ENCODE measurements at regions of chr6 and their contacts with region 1.

Region 1: DNA sequence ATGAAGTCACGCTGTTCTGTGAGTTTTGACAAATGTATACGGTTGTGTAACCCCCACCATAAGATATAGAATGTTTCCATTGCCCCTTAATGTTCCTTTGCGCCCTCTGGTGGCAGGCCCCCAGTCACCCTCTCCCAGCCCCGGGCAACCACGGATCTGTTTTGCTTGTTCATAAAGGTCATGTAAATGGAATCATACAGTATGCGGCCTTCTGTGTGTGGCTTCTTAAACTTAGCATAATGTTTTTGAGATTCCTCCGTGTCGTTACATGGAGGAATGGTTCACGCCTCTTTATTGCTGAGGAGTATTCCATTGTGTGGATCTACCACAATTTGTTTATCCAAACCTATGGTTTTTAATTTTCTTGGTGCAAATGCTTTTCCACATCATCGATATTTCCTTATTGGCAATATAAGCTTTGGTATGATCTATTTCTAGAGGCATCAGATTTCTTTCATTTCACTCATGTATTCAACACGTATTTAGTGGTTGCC is 28.4 kb downstream of the LYRM2 start:
- DNase-seq: no peak
- H3K4me3 ChIP-seq: no peak overlapping the region
- H3K27ac ChIP-seq: no peak overlapping the region
- H3K27me3 ChIP-seq: no peaks in the 10 kb centered on the region
- CTCF ChIP-seq: peak; percentile 77

Region 2: DNA sequence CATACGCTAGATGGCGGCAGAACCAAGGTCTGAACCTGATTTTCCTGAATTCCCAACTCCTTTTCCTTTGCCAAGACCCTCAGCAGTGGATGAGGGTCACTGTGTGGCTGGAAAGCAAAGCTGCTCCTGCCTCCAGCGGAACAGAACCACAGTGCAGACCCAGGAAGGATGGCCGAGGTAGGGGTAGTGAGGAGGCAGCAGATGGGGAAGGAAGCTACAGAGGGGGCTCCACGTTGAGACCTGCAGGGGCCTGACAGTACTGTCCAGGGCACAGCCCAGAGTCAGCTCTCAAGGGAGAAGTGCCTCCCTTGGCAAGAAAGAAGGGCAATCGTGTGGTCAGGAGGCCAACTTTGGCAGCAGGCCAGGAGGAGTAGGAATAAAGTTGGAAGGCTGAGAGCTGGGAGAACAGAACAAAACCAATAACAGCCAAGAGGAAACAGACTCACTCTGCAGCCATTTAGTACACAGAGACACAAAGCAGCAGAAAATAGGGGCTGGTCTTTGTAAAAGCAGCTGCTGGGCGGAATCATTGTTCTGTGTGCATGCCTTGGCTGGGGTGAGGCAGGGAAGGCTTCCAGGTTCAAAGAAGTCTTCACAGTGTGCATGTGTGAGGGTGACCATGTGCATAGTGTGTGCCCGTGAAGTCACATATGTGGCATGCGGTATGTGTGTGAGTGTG is 298.2 kb before region 1 on chr6:
- CTCF ChIA-PET with region 1: interaction called, 10 read pairs
- POLR2A ChIA-PET with region 1: no interaction called
- DNase-seq: no peak
- H3K4me3 ChIP-seq: no peak overlapping the region
- H3K27ac ChIP-seq: no peak overlapping the region
- H3K27me3 ChIP-seq: peaks cover 14% of the 10 kb centered on the region
- CTCF ChIP-seq: peak; percentile 75

Region 3: GRCh38 chr6:89432875-89433251 is 177.3 kb before region 1 on chr6 and contains the start of gene ANKRD6:
- CTCF ChIA-PET with region 1: interaction called, 12 read pairs
- POLR2A ChIA-PET with region 1: no interaction called
- DNase-seq: no peak
- H3K4me3 ChIP-seq: peak within 1 kb of the TSS; percentile 36
- H3K27ac ChIP-seq: no peak within 1 kb of the TSS
- H3K27me3 ChIP-seq: peaks cover 24% of the 10 kb centered on the region
- CTCF ChIP-seq: peak; percentile 54
- polyA plus RNA-seq, gene ANKRD6: 0.10 and 0.21 TPM in 2 replicates

Region 4: GRCh38 chr6:89542081-89542857 is 67.9 kb before region 1 on chr6:
- CTCF ChIA-PET with region 1: no interaction called
- POLR2A ChIA-PET with region 1: no interaction called
- DNase-seq: no peak
- H3K4me3 ChIP-seq: no peak overlapping the region
- H3K27ac ChIP-seq: no peak overlapping the region
- H3K27me3 ChIP-seq: no peaks in the 10 kb centered on the region
- CTCF ChIP-seq: no peak

Region 5: GRCh38 chr6:89667872-89668556 is 57.8 kb after region 1 on chr6:
- CTCF ChIA-PET with region 1: no interaction called
- POLR2A ChIA-PET with region 1: no interaction called
- DNase-seq: no peak
- H3K4me3 ChIP-seq: no peak overlapping the region
- H3K27ac ChIP-seq: no peak overlapping the region
- H3K27me3 ChIP-seq: no peaks in the 10 kb centered on the region
- CTCF ChIP-seq: no peak

Measured in AG04450 (cell line).